Activated CD8-positive, alpha-beta T cell treated with anti-CD3 and anti-CD28 coated beads for 36 hours (primary cell): ENCODE measurements at regions of chr22 and their contacts with region 1.

Region 1: DNA sequence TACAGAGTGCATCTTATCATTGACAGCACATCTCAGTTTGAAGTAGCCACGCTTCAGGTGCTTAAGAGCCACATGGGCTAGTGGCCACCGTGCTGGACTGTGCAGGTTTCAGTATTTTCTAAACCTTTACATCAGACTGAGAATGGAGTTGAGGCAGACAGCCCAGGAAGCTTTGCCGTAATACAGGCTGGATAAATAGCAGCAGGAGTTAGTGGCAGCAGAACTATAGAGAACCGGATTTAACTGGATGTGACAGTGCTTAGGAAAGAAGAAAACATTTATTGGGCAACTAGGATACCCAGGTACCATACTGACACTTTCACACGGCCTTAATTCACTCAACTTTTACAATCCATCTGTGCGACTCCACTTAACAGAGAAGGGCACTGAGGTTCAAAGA is 145.5 kb downstream of the LARGE1 start:
- DNase-seq: no peak
- ATAC-seq: no peak
- H3K4me3 Mint-ChIP-seq: no peak overlapping the region
- H3K27ac Mint-ChIP-seq: no peak overlapping the region
- H3K4me1 Mint-ChIP-seq: no peaks in the 10 kb centered on the region
- H3K27me3 Mint-ChIP-seq: no peaks in the 10 kb centered on the region
- CTCF ChIP-seq: no peak

Region 2: DNA sequence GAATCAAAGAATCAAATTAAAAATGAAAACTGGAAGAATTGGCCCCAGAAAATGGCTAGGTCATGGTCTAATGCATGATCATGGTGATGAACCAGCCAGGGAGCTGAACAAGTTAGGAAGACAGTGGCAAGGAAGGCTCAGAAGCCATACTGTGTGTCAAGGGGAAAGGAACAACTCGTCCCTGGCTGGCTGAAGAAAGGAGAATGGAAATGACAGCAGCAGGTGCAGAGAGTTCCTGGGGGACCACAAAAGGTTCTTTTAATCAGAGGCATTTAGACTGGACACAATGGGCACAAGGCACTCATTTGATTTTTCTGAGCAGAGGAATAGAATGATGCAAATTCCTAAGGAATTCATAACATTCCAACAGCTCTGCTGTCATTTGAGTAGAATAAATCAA is 64.5 kb before region 1 on chr22:
- CTCF ChIA-PET with region 1: no interaction called
- POLR2A ChIA-PET with region 1: no interaction called
- intact Hi-C with region 1: loop called (anchors 10 kb)
- DNase-seq: no peak
- ATAC-seq: no peak
- H3K4me3 Mint-ChIP-seq: no peak overlapping the region
- H3K27ac Mint-ChIP-seq: no peak overlapping the region
- H3K4me1 Mint-ChIP-seq: no peaks in the 10 kb centered on the region
- H3K27me3 Mint-ChIP-seq: no peaks in the 10 kb centered on the region
- CTCF ChIP-seq: no peak

Region 3: GRCh38 chr22:33785283-33785968 is 10.6 kb after region 1 on chr22:
- CTCF ChIA-PET with region 1: no interaction called
- POLR2A ChIA-PET with region 1: no interaction called
- intact Hi-C with region 1: no loop called
- DNase-seq: no peak
- ATAC-seq: no peak
- H3K4me3 Mint-ChIP-seq: no peak overlapping the region
- H3K27ac Mint-ChIP-seq: no peak overlapping the region
- H3K4me1 Mint-ChIP-seq: no peaks in the 10 kb centered on the region
- H3K27me3 Mint-ChIP-seq: no peaks in the 10 kb centered on the region
- CTCF ChIP-seq: no peak